Mucosa of descending colon (tissue), 3 donors: ENCODE measurements at regions of chr11 and their contacts with region 1.

Region 1: DNA sequence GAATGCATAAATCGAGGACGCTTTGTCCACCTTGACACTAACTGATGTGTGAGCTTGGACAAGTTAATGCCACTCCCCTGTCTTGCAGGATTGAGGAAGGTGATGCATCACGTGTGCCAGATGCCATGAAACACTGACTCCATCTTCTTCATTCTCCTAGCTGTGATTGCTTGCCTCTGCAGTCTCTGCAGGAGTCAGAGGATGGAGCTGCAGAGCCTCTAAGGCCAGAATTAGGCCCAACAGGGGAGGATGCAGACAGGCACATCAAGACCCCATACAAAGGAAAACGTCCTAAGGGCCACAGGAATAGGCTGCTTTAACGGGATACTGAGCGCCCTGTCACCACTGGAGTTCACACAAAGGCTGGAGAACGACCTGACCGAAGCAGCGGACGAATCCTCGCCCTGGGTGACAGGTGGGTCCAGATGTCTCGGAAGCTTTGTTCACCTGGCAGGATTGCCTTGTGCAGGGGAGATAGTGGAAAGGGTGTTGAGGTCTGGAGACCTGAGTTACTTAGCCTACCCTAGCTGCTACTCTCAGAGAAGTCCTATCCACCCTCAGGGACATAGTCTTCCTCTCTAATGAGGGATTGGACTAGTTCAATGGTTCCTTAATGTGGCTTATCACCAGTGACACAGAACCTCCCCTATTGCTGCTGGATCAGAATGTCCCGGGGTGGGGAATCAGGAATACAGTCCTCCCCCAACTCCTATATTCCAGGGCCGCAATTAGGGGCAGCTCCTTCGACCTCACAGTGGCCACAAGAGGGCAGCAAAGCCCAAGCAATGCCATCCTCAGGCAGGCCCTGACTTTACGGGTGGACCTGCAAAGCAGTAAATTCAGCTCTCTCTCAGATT is 32.4 kb downstream of the DBX1 start:
- DNase-seq: peak; percentile 64 to 88 (median 83)
- ATAC-seq: peak; percentile 79
- H3K4me3 ChIP-seq: no peak overlapping the region
- H3K4me1 ChIP-seq: peaks cover 3% of the 10 kb centered on the region
- CTCF ChIP-seq: peak; percentile 71

Region 2: GRCh38 chr11:20355221-20356219 is 227.6 kb after region 1 on chr11:
- intact Hi-C with region 1: loop called (anchors 2 to 10 kb)
- DNase-seq: peak in 2 of 3 donors; percentile 45 to 70
- ATAC-seq: peak; percentile 78
- H3K4me3 ChIP-seq: no peak overlapping the region
- H3K4me1 ChIP-seq: no peaks in the 10 kb centered on the region
- CTCF ChIP-seq: peak; percentile 37